Transverse colon (tissue), 4 donors: ENCODE measurements at regions of chr1 and their contacts with region 1.

Region 1: GRCh38 chr1:218345673-218346390 is 696 bp downstream of the TGFB2 start:
- DNase-seq: peak; percentile 25
- H3K4me3 ChIP-seq: peak overlapping the region; percentile 42 to 63 (median 50)
- H3K27ac ChIP-seq: peak overlapping the region; percentile 74 to 88 (median 83)
- H3K4me1 ChIP-seq: peaks cover 0 to 45% (median 14%) of the 10 kb centered on the region in 4 donors
- H3K27me3 ChIP-seq: peaks cover 44% of the 10 kb centered on the region
- CTCF ChIP-seq: no peak
- EP300 ChIP-seq: no peak
- POLR2A ChIP-seq: no peak

Region 2: GRCh38 chr1:218209351-218209861 is 136.4 kb before region 1 on chr1:
- in situ Hi-C with region 1: no loop called
- intact Hi-C with region 1: no loop called
- DNase-seq: no peak
- H3K4me3 ChIP-seq: no peak overlapping the region
- H3K27ac ChIP-seq: no peak overlapping the region
- H3K4me1 ChIP-seq: no peaks in the 10 kb centered on the region
- H3K27me3 ChIP-seq: no peaks in the 10 kb centered on the region
- CTCF ChIP-seq: no peak
- EP300 ChIP-seq: no peak
- POLR2A ChIP-seq: no peak

Region 3: GRCh38 chr1:218401998-218402785 is 56.4 kb after region 1 on chr1:
- in situ Hi-C with region 1: no loop called
- intact Hi-C with region 1: no loop called
- DNase-seq: no peak
- H3K4me3 ChIP-seq: no peak overlapping the region
- H3K27ac ChIP-seq: peak overlapping the region; percentile 2 to 54 (median 39)
- H3K4me1 ChIP-seq: peaks cover 0 to 14% (median 6%) of the 10 kb centered on the region in 4 donors
- H3K27me3 ChIP-seq: no peaks in the 10 kb centered on the region
- CTCF ChIP-seq: no peak
- EP300 ChIP-seq: no peak
- POLR2A ChIP-seq: no peak

Region 4: DNA sequence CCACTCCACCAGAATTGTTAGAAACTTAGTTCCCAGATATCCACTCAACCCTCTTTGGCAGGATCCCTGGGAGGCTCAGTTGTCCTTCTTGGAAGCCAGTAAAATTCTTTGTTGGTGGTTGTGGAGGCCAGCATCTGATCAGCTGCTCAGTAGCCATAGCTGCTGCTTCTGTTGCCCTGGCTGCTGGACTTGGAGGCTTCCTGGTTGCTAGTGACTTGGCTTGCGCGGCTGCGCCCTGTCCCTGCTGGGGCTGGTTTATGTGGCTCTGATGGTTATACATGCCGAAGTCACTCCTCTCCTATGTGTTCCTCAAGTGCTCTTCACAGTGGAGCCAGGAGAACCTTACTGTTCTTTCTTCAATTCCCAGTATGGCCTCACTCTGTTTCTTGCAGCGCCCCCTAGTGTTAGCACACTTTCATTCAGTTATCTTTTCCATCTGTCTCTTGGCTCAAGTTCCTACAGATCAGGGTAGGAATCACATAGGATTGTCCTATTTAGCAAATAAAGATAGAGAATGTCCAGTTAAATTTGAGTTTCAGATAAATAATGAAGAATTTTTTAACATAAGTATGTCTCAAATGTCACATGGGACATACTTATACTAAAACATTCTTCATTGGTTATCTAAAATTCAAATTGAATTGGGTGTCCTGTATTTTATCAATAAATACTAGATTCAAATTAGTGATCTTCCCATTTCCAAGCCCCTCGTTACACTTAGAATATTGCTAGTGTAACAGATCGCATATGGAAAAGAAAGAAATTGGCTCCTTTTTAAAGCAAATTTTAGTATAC is 175.7 kb after region 1 on chr1:
- in situ Hi-C with region 1: loop called in 2 of 4 experiments (anchors 25 kb)
- intact Hi-C with region 1: loop called (anchors 10 kb)
- DNase-seq: peak; percentile 48
- H3K4me3 ChIP-seq: no peak overlapping the region
- H3K27ac ChIP-seq: no peak overlapping the region
- H3K4me1 ChIP-seq: no peaks in the 10 kb centered on the region
- H3K27me3 ChIP-seq: no peaks in the 10 kb centered on the region
- CTCF ChIP-seq: peak in 4 of 5 experiments; percentile 58 to 66 (median 63)
- EP300 ChIP-seq: no peak
- POLR2A ChIP-seq: no peak

Region 5: GRCh38 chr1:218942431-218942830 is 596.6 kb after region 1 on chr1:
- in situ Hi-C with region 1: no loop called
- intact Hi-C with region 1: no loop called
- DNase-seq: no peak
- H3K4me3 ChIP-seq: no peak overlapping the region
- H3K27ac ChIP-seq: no peak overlapping the region
- H3K4me1 ChIP-seq: no peaks in the 10 kb centered on the region
- H3K27me3 ChIP-seq: no peaks in the 10 kb centered on the region
- CTCF ChIP-seq: no peak
- EP300 ChIP-seq: no peak
- POLR2A ChIP-seq: no peak

Region 6: GRCh38 chr1:219385786-219386427 is 1040.1 kb after region 1 on chr1:
- in situ Hi-C with region 1: loop called in 1 of 4 experiments (anchors 25 kb)
- intact Hi-C with region 1: no loop called
- DNase-seq: no peak
- H3K4me3 ChIP-seq: no peak overlapping the region
- H3K27ac ChIP-seq: no peak overlapping the region
- H3K4me1 ChIP-seq: no peaks in the 10 kb centered on the region
- H3K27me3 ChIP-seq: no peaks in the 10 kb centered on the region
- CTCF ChIP-seq: peak in 4 of 5 experiments; percentile 29 to 55 (median 40)
- EP300 ChIP-seq: no peak
- POLR2A ChIP-seq: no peak

Region 7: DNA sequence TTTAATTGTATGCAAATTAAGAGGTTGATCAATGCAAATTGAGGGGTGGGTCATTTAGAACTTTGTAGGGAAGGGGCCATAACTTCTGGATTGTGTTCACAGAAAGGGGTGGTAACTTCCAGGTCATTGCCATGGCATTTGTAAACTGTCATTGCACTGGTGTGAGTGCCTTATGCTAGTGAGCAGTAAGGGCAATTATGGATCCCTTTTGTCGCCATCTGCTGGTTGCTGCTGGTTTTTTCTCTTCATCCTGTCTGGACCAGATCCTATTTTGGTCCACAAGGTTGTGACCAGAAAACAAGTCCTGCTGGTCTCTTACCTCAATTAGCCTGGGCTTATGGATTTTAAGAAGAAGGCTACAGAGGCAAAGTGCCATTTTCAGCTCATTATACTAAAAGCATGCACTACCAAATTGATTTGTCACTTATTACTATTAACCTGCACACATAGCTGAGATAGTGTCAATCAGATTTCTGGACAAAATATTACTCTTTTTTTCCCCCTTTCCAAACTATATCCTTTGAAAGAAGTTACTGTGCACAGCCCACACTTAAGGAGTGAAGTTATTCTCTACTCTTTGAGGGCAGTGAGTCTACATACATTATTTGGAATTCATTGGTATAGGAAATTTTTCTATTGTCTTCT is 1070.9 kb after region 1 on chr1:
- in situ Hi-C with region 1: loop called in 1 of 4 experiments (anchors 25 kb)
- intact Hi-C with region 1: no loop called
- DNase-seq: peak; percentile 59
- H3K4me3 ChIP-seq: no peak overlapping the region
- H3K27ac ChIP-seq: no peak overlapping the region
- H3K4me1 ChIP-seq: no peaks in the 10 kb centered on the region
- H3K27me3 ChIP-seq: no peaks in the 10 kb centered on the region
- CTCF ChIP-seq: peak; percentile 40 to 69 (median 53)
- EP300 ChIP-seq: no peak
- POLR2A ChIP-seq: no peak

Region 8: GRCh38 chr1:219566951-219567947 is 1221.4 kb after region 1 on chr1:
- in situ Hi-C with region 1: loop called in 1 of 4 experiments (anchors 25 kb)
- intact Hi-C with region 1: no loop called
- DNase-seq: no peak
- H3K4me3 ChIP-seq: no peak overlapping the region
- H3K27ac ChIP-seq: no peak overlapping the region
- H3K4me1 ChIP-seq: no peaks in the 10 kb centered on the region
- H3K27me3 ChIP-seq: no peaks in the 10 kb centered on the region
- CTCF ChIP-seq: peak in 3 of 5 experiments; percentile 12 to 20 (median 20)
- EP300 ChIP-seq: no peak
- POLR2A ChIP-seq: no peak

Region 9: DNA sequence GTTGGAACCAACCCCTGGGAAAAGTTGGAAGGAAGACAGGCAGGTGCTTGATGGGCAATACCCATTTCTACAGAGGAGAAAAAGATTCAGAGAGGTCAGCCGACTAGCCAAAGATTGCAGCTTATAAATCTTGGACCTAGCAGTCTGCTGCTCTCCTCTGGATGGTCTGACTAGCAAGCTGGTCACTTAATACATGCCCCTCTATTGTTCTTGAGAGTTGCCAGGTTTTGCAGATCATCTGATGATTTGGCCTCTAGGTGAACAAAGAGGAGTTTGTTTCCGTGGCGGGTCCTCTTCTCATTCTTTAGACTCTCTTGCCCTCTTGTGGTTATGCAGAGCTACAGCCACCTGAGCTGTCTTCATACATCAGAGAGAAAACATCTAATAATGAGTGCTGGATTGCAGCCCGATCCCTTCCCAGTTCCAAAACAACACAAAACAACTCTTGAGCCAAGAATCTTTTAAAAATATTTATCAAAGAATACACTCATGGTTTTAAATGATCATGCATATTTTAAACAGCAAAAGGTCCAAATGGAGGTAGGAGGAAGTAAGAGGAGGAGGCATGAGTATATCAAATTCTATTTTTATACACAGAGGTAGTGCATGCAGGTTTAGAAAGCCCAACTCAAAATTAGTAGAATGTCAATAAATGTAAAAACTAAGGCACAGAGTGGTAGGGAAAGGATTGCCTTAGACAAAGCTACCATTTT is 1466.8 kb after region 1 on chr1:
- in situ Hi-C with region 1: loop called in 3 of 4 experiments (anchors 25 kb)
- intact Hi-C with region 1: no loop called
- DNase-seq: peak; percentile 7
- H3K4me3 ChIP-seq: no peak overlapping the region
- H3K27ac ChIP-seq: no peak overlapping the region
- H3K4me1 ChIP-seq: no peaks in the 10 kb centered on the region
- H3K27me3 ChIP-seq: peaks cover 25% of the 10 kb centered on the region
- CTCF ChIP-seq: peak; percentile 55 to 62 (median 59)
- EP300 ChIP-seq: no peak
- POLR2A ChIP-seq: no peak